ENCODE measurements at regions of chr16 and their contacts with region 1.

Region 1: DNA sequence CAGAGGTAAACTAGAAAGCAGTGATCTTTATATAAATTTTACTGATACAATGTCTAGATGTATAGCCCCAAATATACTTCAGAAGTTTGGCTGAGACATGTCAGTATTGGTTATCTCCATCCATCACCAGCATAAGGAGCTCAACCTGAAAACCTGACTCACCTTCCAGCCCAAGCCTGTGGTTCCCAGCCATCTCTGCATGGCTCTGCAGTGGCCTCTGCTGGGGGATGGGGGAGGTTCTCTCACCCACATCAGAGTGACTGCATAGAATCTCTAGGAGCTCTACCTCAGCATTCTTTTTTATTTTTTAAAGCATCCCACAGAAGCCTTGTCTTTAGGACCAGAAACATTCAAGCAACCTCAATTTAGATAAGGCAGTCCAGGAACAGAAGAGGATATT is 27.3 kb downstream of the USP7 start:
- DNase-seq: peak; percentile 57 to 85 (median 71)
- ATAC-seq: peak; percentile 99
- H3K4me3 ChIP-seq: no peak overlapping the region
- H3K4me3 Mint-ChIP-seq: peak overlapping the region; percentile 12
- H3K27ac ChIP-seq: no peak overlapping the region
- H3K27ac Mint-ChIP-seq: peak overlapping the region; percentile 18
- H3K4me1 ChIP-seq: peaks cover 68% of the 10 kb centered on the region
- H3K4me1 Mint-ChIP-seq: peaks cover 85% of the 10 kb centered on the region
- H3K27me3 ChIP-seq: no peaks in the 10 kb centered on the region
- H3K27me3 Mint-ChIP-seq: no peaks in the 10 kb centered on the region
- CTCF ChIP-seq: peak; percentile 68

Region 2: DNA sequence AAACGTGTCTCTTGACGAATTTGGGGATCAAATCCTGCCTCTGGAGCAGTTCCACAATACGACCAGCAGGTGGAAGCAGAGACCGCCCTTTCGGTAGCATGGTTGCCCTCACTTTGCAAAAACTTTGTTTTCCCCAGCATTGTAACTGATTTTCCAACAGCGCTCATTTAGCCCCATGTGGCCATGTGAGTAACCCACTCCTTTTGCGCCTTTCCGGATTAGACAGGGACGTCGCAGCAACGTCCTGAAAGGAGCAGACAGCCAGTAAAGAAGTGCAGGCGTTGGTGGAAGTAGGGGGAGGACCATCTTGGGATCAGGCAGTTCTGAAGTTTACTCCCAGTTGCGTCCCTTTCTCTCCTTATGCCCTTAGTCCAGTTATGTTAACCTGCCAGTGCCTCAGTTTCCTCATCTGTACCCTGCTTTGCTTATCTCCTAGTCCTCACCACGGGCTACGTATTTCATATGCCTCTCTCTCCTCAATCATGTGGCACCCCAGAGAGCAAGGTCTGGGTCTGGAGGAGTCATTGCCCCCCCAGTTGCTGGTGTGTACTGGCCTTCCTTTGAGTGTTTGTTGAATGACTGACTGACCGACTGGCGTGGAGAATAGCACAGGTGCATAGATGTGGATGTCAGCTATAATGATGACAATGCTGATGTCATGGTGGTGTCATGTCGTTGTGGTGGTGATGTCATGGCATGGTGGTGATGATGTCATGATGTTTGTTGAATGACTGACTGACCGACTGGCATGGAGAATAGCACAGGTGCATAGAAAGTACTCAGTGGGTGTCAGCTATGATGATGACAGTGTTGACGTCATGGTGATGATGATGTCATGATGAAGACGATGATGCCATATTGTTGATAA is 368.4 kb before region 1 on chr16:
- CTCF ChIA-PET with region 1: no interaction called
- POLR2A ChIA-PET with region 1: no interaction called
- intact Hi-C with region 1: loop called in 1 of 2 experiments (anchors 1 kb)
- DNase-seq: peak; percentile 58 to 90 (median 69)
- ATAC-seq: peak; percentile 92
- H3K4me3 ChIP-seq: no peak overlapping the region
- H3K4me3 Mint-ChIP-seq: no peak overlapping the region
- H3K27ac ChIP-seq: no peak overlapping the region
- H3K27ac Mint-ChIP-seq: peak overlapping the region; percentile 58
- H3K4me1 ChIP-seq: peaks cover 9% of the 10 kb centered on the region
- H3K4me1 Mint-ChIP-seq: peaks cover 10% of the 10 kb centered on the region
- H3K27me3 ChIP-seq: peaks cover 0 to 2% of the 10 kb centered on the region in 2 experiments
- H3K27me3 Mint-ChIP-seq: peaks cover 31% of the 10 kb centered on the region
- CTCF ChIP-seq: peak; percentile 99

Region 3: GRCh38 chr16:8878521-8878911 is 57.9 kb before region 1 on chr16:
- CTCF ChIA-PET with region 1: interaction called, 17 read pairs
- POLR2A ChIA-PET with region 1: interaction called, 3 read pairs
- intact Hi-C with region 1: no loop called
- DNase-seq: no peak
- ATAC-seq: no peak
- H3K4me3 ChIP-seq: no peak overlapping the region
- H3K4me3 Mint-ChIP-seq: no peak overlapping the region
- H3K27ac ChIP-seq: no peak overlapping the region
- H3K27ac Mint-ChIP-seq: no peak overlapping the region
- H3K4me1 ChIP-seq: peaks cover 19% of the 10 kb centered on the region
- H3K4me1 Mint-ChIP-seq: peaks cover 10% of the 10 kb centered on the region
- H3K27me3 ChIP-seq: peaks cover 0 to 2% of the 10 kb centered on the region in 2 experiments
- H3K27me3 Mint-ChIP-seq: no peaks in the 10 kb centered on the region
- CTCF ChIP-seq: no peak

Region 4: DNA sequence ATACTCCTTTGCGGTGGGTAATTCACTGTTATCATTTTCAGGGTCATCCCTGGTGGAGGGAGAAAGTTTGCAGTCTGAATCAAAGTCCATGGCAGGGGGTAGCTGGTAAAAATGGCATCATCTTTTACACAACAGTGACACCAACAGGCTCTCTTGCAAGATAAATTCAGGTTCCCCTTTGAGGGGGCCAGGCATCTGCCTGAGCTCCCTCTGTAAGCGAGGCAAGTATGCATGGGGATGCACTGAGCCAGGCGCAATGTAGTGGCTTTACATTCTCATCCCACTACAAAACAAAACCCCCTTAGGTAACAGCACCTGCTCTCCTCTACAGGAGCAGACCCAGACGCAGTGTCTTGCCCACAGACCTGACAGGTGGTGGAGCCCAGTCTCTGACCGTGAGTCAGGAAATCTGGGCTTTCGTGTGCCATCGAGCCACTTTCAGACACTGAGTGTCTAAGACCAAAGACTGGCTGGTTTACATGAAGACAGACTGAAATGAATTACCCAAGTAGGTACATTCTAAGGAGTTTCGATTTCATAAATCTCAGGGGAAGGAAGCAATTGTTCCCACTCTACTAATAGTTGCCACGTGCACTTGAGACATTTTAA is 36.6 kb before region 1 on chr16:
- CTCF ChIA-PET with region 1: interaction called, 15 read pairs
- POLR2A ChIA-PET with region 1: no interaction called
- intact Hi-C with region 1: loop called in 1 of 2 experiments (anchors 1 kb)
- DNase-seq: no peak
- ATAC-seq: no peak
- H3K4me3 ChIP-seq: no peak overlapping the region
- H3K4me3 Mint-ChIP-seq: no peak overlapping the region
- H3K27ac ChIP-seq: no peak overlapping the region
- H3K27ac Mint-ChIP-seq: peak overlapping the region; percentile 15
- H3K4me1 ChIP-seq: no peaks in the 10 kb centered on the region
- H3K4me1 Mint-ChIP-seq: no peaks in the 10 kb centered on the region
- H3K27me3 ChIP-seq: no peaks in the 10 kb centered on the region
- H3K27me3 Mint-ChIP-seq: no peaks in the 10 kb centered on the region
- CTCF ChIP-seq: no peak

Region 5: DNA sequence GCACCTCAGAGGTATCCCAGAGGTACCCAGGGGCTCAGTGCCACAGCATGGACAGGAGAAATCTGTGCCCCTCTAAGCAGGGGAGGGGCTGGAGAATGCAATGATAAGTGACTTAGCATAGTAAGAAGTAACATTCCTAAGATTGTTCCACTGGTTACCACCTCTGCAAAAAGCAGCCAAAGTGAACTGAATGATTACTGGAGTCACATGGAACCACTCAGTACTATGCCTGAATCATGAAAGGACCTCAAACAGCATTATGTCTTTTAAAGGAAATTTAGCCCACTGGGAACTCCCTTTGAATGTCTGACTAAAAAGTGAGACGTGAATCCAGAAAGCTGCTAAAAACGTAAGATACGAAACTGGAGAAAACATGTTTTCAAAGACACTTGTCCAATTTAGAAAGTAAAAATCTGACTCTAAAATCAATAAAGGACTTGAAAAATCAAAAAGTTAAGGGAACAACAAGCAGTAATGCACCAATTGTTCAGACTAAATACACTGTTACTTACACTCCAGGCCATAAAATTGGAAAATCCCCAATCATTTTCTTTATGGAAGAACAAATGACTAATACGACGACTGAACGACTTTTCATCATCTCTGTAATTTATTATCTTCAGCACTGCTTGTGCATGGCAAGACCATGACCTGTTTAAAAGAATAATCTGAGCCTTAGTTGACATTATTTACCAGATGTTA is 15.6 kb before region 1 on chr16:
- CTCF ChIA-PET with region 1: interaction called, 21 read pairs
- POLR2A ChIA-PET with region 1: no interaction called
- intact Hi-C with region 1: no loop called
- DNase-seq: no peak
- ATAC-seq: no peak
- H3K4me3 ChIP-seq: no peak overlapping the region
- H3K4me3 Mint-ChIP-seq: no peak overlapping the region
- H3K27ac ChIP-seq: no peak overlapping the region
- H3K27ac Mint-ChIP-seq: peak overlapping the region; percentile 75
- H3K4me1 ChIP-seq: peaks cover 24% of the 10 kb centered on the region
- H3K4me1 Mint-ChIP-seq: peaks cover 38% of the 10 kb centered on the region
- H3K27me3 ChIP-seq: no peaks in the 10 kb centered on the region
- H3K27me3 Mint-ChIP-seq: no peaks in the 10 kb centered on the region
- CTCF ChIP-seq: no peak

Region 6: GRCh38 chr16:8963825-8964441 is 27.5 kb after region 1 on chr16 and contains the start of gene USP7:
- CTCF ChIA-PET with region 1: interaction called, 22 read pairs
- POLR2A ChIA-PET with region 1: interaction called, 6 read pairs
- intact Hi-C with region 1: loop called (anchors 2 kb)
- DNase-seq: peak; percentile 85 to 97 (median 91)
- ATAC-seq: peak; percentile 88
- H3K4me3 ChIP-seq: peak within 1 kb of the TSS; percentile 75
- H3K4me3 Mint-ChIP-seq: peak within 1 kb of the TSS; percentile 97
- H3K27ac ChIP-seq: peak within 1 kb of the TSS; percentile 64 to 81
- H3K27ac Mint-ChIP-seq: peak within 1 kb of the TSS; percentile 94
- H3K4me1 ChIP-seq: peaks cover 42% of the 10 kb centered on the region
- H3K4me1 Mint-ChIP-seq: peaks cover 47% of the 10 kb centered on the region
- H3K27me3 ChIP-seq: no peaks in the 10 kb centered on the region
- H3K27me3 Mint-ChIP-seq: no peaks in the 10 kb centered on the region
- CTCF ChIP-seq: no peak
- total RNA-seq, gene USP7: 259 to 268 TPM

Measured in CD4-positive, alpha-beta T cell (primary cell).